ENCODE measurements at regions of chr14 and their contacts with region 1.

Region 1: GRCh38 chr14:24817212-24818057 is 183.4 kb upstream of the GZMB start:
- DNase-seq: peak; percentile 98
- ATAC-seq: peak; percentile 57
- H3K4me3 ChIP-seq: peak overlapping the region; percentile 18 to 56 (median 35)
- H3K27ac ChIP-seq: peak overlapping the region; percentile 86
- H3K4me1 ChIP-seq: peaks cover 76% of the 10 kb centered on the region
- H3K27me3 ChIP-seq: no peaks in the 10 kb centered on the region
- CTCF ChIP-seq: peak; percentile 81
- EP300 ChIP-seq: peak in 1 of 2 experiments; percentile 88; a peak in 2 of 4 replicates
- POLR2A ChIP-seq: no peak
- RAD21 ChIP-seq: 0 out of 2 replicates have a peak, but pooled peaks have one; percentile 9

Region 2: DNA sequence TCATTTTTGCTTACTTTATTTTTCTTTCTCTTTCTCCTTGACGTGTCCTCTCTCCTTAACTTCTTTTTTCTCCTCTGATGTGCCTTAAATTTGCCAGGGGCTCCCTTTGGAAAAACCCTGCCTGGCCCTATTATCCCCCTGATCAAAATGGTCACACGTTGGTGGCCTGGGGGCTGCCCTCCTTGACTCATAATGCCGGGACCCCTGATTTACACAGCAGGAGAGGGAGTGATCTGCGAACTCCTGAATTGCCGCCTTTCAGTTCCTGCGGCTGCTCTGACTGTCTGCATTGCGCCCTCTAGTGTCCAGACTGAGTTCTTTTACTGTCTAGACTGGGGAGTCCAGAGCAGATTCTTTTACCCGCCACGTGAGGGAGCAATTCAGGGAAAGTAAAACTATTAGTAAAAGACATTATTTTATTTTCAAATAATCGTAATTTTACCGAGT is 138.6 kb before region 1 on chr14:
- CTCF ChIA-PET with region 1: no interaction called
- POLR2A ChIA-PET with region 1: no interaction called
- in situ Hi-C with region 1: no loop called
- intact Hi-C with region 1: no loop called
- DNase-seq: peak; percentile 98
- ATAC-seq: peak; percentile 100
- H3K4me3 ChIP-seq: peak overlapping the region; percentile 2 to 55 (median 36)
- H3K27ac ChIP-seq: no peak overlapping the region
- H3K4me1 ChIP-seq: peaks cover 6% of the 10 kb centered on the region
- H3K27me3 ChIP-seq: peaks cover 0 to 9% of the 10 kb centered on the region in 2 experiments
- CTCF ChIP-seq: peak; percentile 99
- EP300 ChIP-seq: no peak
- POLR2A ChIP-seq: no peak
- RAD21 ChIP-seq: no peak; the same call in 1 of the 2 replicates

Region 3: GRCh38 chr14:24806061-24806678 is 11.3 kb before region 1 on chr14:
- CTCF ChIA-PET with region 1: interaction called, 6 read pairs
- POLR2A ChIA-PET with region 1: interaction called, 21 read pairs
- in situ Hi-C with region 1: no loop called
- intact Hi-C with region 1: no loop called
- DNase-seq: peak; percentile 88
- ATAC-seq: peak; percentile 81
- H3K4me3 ChIP-seq: no peak overlapping the region
- H3K27ac ChIP-seq: no peak overlapping the region
- H3K4me1 ChIP-seq: peaks cover 58% of the 10 kb centered on the region
- H3K27me3 ChIP-seq: no peaks in the 10 kb centered on the region
- CTCF ChIP-seq: peak; percentile 99
- EP300 ChIP-seq: no peak
- POLR2A ChIP-seq: no peak
- RAD21 ChIP-seq: peak; percentile 99

Region 4: DNA sequence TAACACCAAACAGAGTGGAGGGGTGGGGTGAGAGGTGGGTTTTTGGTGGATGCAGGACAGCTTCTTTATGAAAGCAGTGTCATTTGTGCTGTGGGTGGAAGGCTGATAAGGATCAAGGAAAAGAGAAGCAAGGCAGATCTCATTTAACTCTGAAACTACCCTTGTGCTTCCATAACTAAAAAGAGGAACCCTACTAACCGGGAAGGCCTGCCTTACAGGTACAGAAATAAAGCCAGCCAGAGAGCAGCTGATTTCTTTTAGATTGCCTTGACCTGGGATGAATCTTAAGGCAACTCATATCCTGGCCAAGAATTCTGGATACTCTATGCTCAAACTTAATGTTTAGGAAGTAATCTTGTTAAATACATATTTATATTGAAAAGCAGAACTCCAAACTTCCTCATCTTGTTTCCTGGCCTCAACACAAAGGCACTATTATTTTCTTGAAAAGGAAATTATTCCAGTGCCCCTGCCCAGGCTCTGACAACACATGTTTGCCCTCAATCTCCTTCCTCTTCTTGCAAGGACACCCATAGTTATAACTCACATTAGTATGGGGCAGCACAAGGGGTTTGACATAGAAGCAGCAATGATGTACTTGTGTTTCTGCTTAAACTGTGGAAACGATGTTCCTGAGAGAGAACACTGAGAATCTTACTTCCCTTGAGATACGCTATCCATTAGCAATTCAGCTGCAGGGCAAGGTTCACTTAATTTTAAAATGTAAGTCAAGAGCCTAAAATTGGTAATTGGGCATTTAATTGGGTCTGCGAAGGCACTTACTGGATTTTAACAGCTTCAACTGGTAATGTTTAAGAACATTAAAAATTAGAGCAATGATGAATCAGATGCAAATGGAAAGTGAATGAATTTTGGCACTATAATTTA is 58.8 kb after region 1 on chr14:
- CTCF ChIA-PET with region 1: no interaction called
- POLR2A ChIA-PET with region 1: interaction called, 12 read pairs
- in situ Hi-C with region 1: no loop called
- intact Hi-C with region 1: loop called (anchors 2 kb)
- DNase-seq: no peak
- ATAC-seq: no peak
- H3K4me3 ChIP-seq: no peak overlapping the region
- H3K27ac ChIP-seq: no peak overlapping the region
- H3K4me1 ChIP-seq: peaks cover 69% of the 10 kb centered on the region
- H3K27me3 ChIP-seq: no peaks in the 10 kb centered on the region
- CTCF ChIP-seq: no peak
- EP300 ChIP-seq: no peak
- POLR2A ChIP-seq: no peak
- RAD21 ChIP-seq: no peak

Region 5: DNA sequence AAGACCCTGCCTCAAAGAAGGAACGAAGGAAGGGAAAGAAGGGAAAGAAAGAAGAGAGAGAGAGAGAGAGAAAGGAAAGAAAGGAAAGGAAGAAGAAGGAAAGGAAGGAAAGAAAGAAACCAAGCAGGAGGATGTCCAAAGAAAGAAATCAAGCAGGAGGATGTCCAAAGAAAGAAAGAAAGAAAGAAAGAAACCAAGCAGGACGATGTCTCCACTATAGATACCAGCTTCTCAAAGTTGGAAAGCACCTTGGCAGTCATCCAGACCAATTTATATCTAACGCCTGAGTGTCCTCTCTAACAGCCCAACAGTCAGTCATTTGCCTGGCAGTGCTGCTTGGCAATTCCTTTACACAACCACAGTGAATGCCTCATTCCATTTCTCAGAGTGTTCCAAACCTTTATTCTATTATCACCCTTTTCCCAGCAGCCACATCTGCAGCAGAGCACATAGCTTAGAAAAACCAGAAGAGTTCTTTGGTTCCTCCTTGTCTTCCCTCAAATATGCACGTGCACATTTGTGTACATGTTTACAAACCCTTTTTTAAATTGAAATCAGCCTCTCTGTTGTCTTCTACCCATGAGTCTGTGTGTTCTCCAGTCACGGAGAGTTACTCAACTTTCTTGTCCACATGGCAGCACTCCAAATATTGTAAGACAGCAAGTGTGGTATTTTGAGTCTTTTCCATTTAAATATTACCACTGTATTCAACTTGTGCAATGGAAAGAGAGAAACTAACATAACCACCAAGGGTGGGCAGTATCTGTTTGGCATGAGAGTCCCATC is 94.1 kb after region 1 on chr14:
- CTCF ChIA-PET with region 1: no interaction called
- POLR2A ChIA-PET with region 1: interaction called, 20 read pairs
- in situ Hi-C with region 1: no loop called
- intact Hi-C with region 1: loop called (anchors 2 kb)
- DNase-seq: no peak
- ATAC-seq: no peak
- H3K4me3 ChIP-seq: no peak overlapping the region
- H3K27ac ChIP-seq: no peak overlapping the region
- H3K4me1 ChIP-seq: peaks cover 64% of the 10 kb centered on the region
- H3K27me3 ChIP-seq: no peaks in the 10 kb centered on the region
- CTCF ChIP-seq: no peak
- EP300 ChIP-seq: no peak
- POLR2A ChIP-seq: no peak
- RAD21 ChIP-seq: no peak

Region 6: DNA sequence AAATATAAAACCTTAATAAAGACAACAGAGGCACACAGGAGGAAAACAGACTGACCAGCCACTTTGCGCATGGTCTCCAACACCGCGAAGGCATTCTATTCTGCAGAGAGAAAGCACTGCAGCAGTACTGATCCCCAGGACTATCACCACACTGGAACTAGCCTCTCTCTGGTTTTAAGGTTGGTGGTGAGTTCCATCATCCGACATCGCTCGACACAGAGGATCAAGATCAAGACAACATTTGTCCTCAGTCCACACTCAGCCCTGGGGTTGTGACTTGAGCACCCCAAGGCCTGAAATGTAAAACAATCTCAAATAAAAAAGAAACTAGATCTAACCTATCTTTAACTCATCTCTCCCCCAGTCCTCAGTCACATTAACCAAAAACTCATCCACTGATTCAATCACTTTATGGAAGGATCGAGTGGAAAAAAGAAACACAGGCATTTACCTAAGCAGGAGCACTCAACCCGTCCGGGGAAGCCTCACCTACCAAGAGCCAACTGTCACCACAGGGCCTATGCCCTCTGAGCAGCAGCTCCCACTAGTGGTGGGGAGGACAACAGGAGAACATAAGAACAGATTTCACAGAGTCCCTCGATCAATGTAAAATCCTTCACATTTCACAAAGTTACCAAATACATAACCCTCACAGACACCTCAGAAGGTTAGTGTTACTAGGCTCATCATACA is 214.8 kb after region 1 on chr14:
- CTCF ChIA-PET with region 1: interaction called, 3 read pairs
- POLR2A ChIA-PET with region 1: interaction called, 6 read pairs
- in situ Hi-C with region 1: no loop called
- intact Hi-C with region 1: loop called (anchors 1 kb)
- DNase-seq: peak; percentile 84
- ATAC-seq: peak; percentile 82
- H3K4me3 ChIP-seq: peak overlapping the region; percentile 25 to 62 (median 56)
- H3K27ac ChIP-seq: peak overlapping the region; percentile 6
- H3K4me1 ChIP-seq: peaks cover 48% of the 10 kb centered on the region
- H3K27me3 ChIP-seq: no peaks in the 10 kb centered on the region
- CTCF ChIP-seq: peak; percentile 94
- EP300 ChIP-seq: no peak
- POLR2A ChIP-seq: peak; percentile 31 to 46; a peak in 1 of 4 replicates
- RAD21 ChIP-seq: peak; percentile 88

Measured in HepG2 (cell line).